AG04450 (cell line): ENCODE measurements at regions of chr2 and their contacts with region 1.

Region 1: GRCh38 chr2:86079981-86080911 is 25.4 kb downstream of the POLR1A start:
- DNase-seq: peak; percentile 21
- H3K4me3 ChIP-seq: no peak overlapping the region
- H3K27ac ChIP-seq: no peak overlapping the region
- H3K27me3 ChIP-seq: no peaks in the 10 kb centered on the region
- CTCF ChIP-seq: peak; percentile 84

Region 2: DNA sequence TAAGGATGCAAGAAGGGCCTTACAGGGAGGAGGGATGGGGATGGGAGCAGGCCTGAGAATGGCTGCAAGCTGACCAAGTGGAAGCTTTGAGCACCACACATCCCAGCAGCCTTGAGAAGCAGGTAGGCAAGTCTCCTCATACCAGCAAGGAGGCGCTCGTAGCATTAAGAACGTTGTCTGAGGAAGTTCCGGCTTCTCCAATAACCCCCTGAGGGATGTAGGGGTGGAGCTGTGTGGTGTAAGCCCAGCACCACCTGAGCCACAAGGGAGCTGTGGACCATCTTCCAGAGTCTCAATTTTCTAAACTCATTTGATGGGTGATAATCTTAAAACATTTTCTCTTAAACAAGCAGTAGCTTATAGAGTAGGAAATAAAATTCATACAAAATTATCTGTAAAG is 242.1 kb before region 1 on chr2:
- CTCF ChIA-PET with region 1: interaction called, 375 read pairs
- POLR2A ChIA-PET with region 1: no interaction called
- DNase-seq: no peak
- H3K4me3 ChIP-seq: no peak overlapping the region
- H3K27ac ChIP-seq: no peak overlapping the region
- H3K27me3 ChIP-seq: no peaks in the 10 kb centered on the region
- CTCF ChIP-seq: no peak

Region 3: GRCh38 chr2:85844486-85844885 is 235.8 kb before region 1 on chr2:
- CTCF ChIA-PET with region 1: interaction called, 21 read pairs
- POLR2A ChIA-PET with region 1: no interaction called
- DNase-seq: no peak
- H3K4me3 ChIP-seq: no peak overlapping the region
- H3K27ac ChIP-seq: no peak overlapping the region
- H3K27me3 ChIP-seq: no peaks in the 10 kb centered on the region
- CTCF ChIP-seq: no peak

Region 4: DNA sequence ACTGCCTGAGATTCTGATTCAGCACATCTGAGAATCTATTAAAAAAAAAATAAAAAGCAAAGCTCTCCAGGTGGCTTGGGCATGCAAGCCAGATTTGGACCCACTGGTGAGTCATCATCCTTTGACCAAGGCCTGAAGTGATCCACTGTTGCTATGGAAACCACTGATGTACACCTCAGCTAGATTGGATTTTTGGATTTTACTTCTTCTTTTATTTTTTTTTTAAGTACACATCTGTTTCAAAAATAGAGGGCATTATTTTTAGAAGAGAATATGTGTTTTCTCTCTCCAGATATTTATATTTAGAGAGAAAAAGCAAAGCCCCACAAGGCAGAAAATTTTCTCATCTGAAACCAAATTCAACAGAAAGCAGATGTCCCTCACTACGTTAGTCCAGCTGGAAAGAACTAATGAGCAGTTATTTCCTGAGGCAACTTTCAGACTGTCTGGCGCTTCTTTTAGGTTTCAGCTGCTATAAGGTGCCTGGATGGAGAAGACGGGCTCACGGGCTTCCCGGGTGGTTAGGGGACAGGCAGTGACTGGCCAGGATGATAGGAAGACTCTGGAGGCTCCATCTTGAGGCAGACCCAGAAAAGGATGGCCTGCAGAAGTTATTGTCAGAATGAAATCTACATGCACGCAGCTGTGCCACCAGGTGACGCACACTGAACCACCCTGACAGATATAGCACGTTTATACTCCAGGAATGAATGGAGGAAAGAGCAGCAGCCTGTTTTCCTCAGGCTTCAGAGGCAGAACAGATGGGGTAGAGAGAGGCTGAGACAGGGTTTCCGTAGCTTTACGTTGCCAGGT is 169.5 kb after region 1 on chr2:
- CTCF ChIA-PET with region 1: no interaction called
- POLR2A ChIA-PET with region 1: no interaction called
- DNase-seq: peak; percentile 57
- H3K4me3 ChIP-seq: no peak overlapping the region
- H3K27ac ChIP-seq: peak overlapping the region; percentile 42
- H3K27me3 ChIP-seq: peaks cover 21% of the 10 kb centered on the region
- CTCF ChIP-seq: no peak

Region 5: DNA sequence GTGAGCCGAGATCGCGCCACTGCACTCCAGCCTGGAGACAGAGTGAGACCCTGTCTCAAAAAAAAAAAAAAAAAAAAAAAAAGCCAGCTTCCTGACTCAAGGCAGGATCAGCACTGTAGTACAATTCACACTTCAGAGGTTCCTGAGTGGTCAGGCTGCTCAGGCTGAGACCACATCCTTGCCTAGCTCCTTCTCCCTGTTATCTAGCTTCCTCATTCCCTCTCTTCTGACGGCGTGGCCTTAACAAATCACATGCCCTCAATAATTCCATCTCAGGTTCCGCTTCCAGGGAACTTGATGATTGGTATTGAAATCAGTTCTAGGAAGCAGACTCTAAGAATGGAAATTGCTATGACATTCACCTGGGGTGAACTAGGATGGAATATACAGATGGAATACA is 331.1 kb after region 1 on chr2:
- CTCF ChIA-PET with region 1: no interaction called
- POLR2A ChIA-PET with region 1: no interaction called
- DNase-seq: no peak
- H3K4me3 ChIP-seq: no peak overlapping the region
- H3K27ac ChIP-seq: no peak overlapping the region
- H3K27me3 ChIP-seq: peaks cover 2% of the 10 kb centered on the region
- CTCF ChIP-seq: no peak